ENCODE measurements at regions of chr2 and their contacts with region 1.

Region 1: DNA sequence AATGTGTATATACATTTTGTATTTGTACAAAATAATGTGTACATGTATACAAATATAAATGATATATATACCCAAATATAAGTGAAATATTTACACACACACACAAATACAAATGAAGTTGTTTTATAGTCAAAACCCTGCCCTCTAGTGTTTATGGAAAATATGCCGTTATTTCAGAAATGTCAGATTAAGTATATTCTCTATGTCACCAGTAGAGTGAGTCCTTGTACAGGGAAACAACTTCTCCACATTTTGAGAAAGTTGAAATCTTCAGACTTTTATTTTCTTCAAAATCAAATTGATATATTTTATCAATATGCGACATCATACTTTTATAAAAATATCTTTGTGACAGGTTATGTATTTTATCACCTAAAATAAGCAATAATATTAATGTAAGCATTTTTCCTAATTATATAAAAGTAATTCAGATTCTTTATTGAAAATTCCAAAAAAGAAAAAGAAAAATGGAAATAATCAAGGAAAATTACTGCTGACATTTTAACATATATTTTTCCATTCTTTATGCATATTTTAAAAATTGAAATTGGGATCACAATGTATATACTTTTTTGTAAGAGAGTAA is 22.4 kb downstream of the ARL6IP6 start:
- DNase-seq: no peak
- H3K4me3 Mint-ChIP-seq: no peak overlapping the region
- H3K27ac Mint-ChIP-seq: no peak overlapping the region
- H3K4me1 Mint-ChIP-seq: no peaks in the 10 kb centered on the region
- H3K27me3 Mint-ChIP-seq: no peaks in the 10 kb centered on the region

Region 2: DNA sequence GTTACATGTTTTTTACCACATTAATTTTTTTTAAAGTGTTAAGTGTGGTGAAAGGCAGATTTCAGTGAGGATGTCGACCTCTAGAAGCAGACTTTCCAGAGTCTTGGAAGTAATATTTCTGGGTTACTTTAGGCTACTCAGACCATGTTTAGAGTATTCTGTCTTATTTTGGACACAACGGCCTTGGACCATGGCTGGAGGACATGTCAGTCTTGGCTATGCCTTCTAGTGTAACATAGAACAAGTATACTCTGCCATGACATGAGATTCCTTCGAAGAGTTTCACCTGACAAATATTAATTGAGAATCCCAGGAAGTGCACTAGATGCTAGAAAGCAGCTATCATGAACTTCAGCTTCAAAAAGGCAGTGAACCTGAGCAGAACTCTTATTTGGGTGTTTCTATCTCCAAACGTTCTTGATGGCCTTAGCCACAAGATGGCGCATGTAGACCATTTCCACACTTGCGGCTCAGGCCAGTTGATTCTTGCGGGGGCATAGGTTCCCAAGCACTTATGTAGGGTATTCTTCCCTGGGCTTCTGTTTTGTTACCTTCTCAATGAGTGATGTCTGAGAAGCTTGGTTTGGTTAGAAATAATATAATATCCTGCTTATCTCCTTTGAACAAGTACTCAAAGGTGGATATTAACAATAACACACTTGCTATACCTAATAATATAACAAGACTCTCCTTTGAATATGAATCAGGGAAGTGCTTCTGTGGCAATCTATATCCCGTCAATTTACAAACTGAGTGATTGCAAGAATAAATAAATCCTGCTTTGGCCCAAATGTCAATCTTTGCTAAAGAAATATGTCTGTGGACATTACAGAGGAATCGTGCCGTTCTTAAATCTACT is 704.0 kb before region 1 on chr2:
- intact Hi-C with region 1: loop called (anchors 5 kb)
- DNase-seq: peak; percentile 85
- H3K4me3 Mint-ChIP-seq: no peak overlapping the region
- H3K27ac Mint-ChIP-seq: no peak overlapping the region
- H3K4me1 Mint-ChIP-seq: no peaks in the 10 kb centered on the region
- H3K27me3 Mint-ChIP-seq: peaks cover under 1% of the 10 kb centered on the region

Region 3: GRCh38 chr2:152525277-152525838 is 215.5 kb before region 1 on chr2:
- intact Hi-C with region 1: no loop called
- DNase-seq: no peak
- H3K4me3 Mint-ChIP-seq: no peak overlapping the region
- H3K27ac Mint-ChIP-seq: no peak overlapping the region
- H3K4me1 Mint-ChIP-seq: peaks cover 4% of the 10 kb centered on the region
- H3K27me3 Mint-ChIP-seq: peaks cover 8% of the 10 kb centered on the region

Region 4: GRCh38 chr2:152717228-152718075 is 23.4 kb before region 1 on chr2 and contains the start of gene PRPF40A:
- intact Hi-C with region 1: loop called (anchors 1 kb)
- DNase-seq: peak; percentile 100
- H3K4me3 Mint-ChIP-seq: peak within 1 kb of the TSS; percentile 98
- H3K27ac Mint-ChIP-seq: peak within 1 kb of the TSS; percentile 98
- H3K4me1 Mint-ChIP-seq: peaks cover 48% of the 10 kb centered on the region
- H3K27me3 Mint-ChIP-seq: peaks cover 2% of the 10 kb centered on the region
- total RNA-seq, gene PRPF40A: 166 TPM in 2 replicates

Region 5: GRCh38 chr2:152755029-152755428 is 14.2 kb after region 1 on chr2:
- intact Hi-C with region 1: loop called (anchors 2 kb)
- DNase-seq: no peak
- H3K4me3 Mint-ChIP-seq: no peak overlapping the region
- H3K27ac Mint-ChIP-seq: no peak overlapping the region
- H3K4me1 Mint-ChIP-seq: peaks cover 2% of the 10 kb centered on the region
- H3K27me3 Mint-ChIP-seq: no peaks in the 10 kb centered on the region

Region 6: GRCh38 chr2:153519257-153519875 is 778.5 kb after region 1 on chr2:
- intact Hi-C with region 1: loop called (anchors 5 kb)
- DNase-seq: peak; percentile 83
- H3K4me3 Mint-ChIP-seq: no peak overlapping the region
- H3K27ac Mint-ChIP-seq: no peak overlapping the region
- H3K4me1 Mint-ChIP-seq: no peaks in the 10 kb centered on the region
- H3K27me3 Mint-ChIP-seq: no peaks in the 10 kb centered on the region